Aorta (tissue), 5 donors: ENCODE measurements at regions of chr7 and their contacts with region 1.

Region 1: DNA sequence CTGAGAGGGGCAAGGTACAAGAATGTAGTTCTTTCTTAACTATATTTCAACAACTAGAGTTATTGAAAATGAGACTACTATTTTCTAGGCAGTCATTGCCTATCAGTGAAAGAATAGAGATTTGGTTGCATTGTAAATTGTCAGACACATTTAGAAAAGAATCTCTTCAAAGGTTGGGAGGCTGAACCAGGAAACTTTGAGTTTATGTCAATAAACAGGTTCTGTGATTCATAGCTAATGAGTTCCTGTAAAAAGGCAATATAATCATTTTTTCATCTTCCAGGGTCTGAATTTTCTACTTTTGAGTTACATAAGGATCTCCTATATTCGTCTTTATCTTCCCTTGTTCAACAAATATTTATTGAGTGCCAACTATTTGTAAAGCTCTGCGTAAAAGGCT is 47.1 kb downstream of the MAGI2 start:
- DNase-seq: no peak
- ATAC-seq: no peak
- H3K4me3 ChIP-seq: no peak overlapping the region
- H3K27ac ChIP-seq: no peak overlapping the region
- H3K4me1 ChIP-seq: peaks cover 0 to 1% of the 10 kb centered on the region in 2 donors
- H3K27me3 ChIP-seq: no peaks in the 10 kb centered on the region

Region 2: GRCh38 chr7:79452032-79452494 is 45.7 kb after region 1 on chr7:
- intact Hi-C with region 1: loop called (anchors 5 kb)
- DNase-seq: peak; percentile 91 to 95
- ATAC-seq: peak; percentile 91
- H3K4me3 ChIP-seq: peak overlapping the region; percentile 46 to 85
- H3K27ac ChIP-seq: peak overlapping the region; percentile 15 to 80
- H3K4me1 ChIP-seq: peaks cover 0 to 3% of the 10 kb centered on the region in 2 donors
- H3K27me3 ChIP-seq: no peaks in the 10 kb centered on the region

Region 3: DNA sequence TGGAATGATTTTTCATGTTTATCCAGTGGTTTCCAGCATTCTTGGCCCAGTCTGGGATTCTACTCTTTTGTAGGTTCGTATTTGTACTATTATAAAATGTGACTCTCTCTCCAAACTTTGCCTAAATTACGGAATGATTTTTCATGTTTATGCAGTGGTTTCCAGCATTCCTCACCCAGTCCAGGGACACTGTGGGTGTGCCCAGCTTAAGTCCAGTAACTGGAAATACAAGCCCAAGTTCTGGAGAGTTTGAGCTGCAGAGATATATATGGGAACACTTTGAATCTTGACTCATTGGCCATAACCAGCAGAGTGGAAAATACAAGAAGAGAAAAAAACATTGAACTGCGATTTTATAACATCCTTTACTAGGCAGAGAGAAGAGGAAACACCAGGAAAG is 53.0 kb after region 1 on chr7:
- intact Hi-C with region 1: loop called (anchors 5 kb)
- DNase-seq: peak in 1 of 2 donors; percentile 62
- ATAC-seq: peak; percentile 72
- H3K4me3 ChIP-seq: no peak overlapping the region
- H3K27ac ChIP-seq: no peak overlapping the region
- H3K4me1 ChIP-seq: peaks cover 0 to 3% of the 10 kb centered on the region in 2 donors
- H3K27me3 ChIP-seq: no peaks in the 10 kb centered on the region